AG04449 (cell line): ENCODE measurements at regions of chr10 and their contacts with region 1.

Region 1: GRCh38 chr10:3197348-3198003 is 24.9 kb upstream of the PITRM1 start:
- DNase-seq: peak; percentile 51
- H3K4me3 ChIP-seq: peak overlapping the region; percentile 57
- CTCF ChIP-seq: peak; percentile 93

Region 2: DNA sequence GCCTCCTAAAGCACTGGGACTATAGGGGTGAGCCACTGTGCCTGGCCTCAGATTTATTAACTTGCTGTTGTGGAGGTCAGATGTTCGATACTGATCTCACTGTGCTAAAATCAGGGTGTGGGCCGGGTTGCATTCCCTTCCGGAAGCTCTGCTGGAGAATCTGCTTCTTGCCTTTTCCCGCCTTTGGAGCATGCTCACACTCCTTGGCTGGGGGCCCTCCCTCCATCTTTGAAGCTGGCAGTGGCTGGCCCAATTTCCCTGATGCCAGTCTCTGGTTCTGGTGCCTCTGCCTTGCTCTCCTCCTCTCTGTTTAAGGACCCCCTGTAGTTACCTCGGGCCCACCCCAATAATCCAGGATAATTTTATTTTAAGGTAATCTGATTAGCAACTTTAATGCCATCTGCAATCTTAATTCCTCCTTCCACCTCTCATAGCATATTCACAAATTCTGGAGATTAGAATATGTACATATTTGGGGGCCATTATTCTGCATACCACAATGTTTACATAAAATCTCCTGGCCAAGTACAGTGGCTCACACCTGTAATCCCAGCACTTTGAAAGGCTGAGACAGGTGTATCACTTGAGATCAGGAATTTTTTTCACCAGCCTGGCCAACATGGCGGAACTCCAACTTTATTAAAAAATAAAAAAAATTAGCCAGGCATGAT is 17.0 kb before region 1 on chr10:
- CTCF ChIA-PET with region 1: interaction called, 32 read pairs
- POLR2A ChIA-PET with region 1: no interaction called
- DNase-seq: no peak
- H3K4me3 ChIP-seq: no peak overlapping the region
- CTCF ChIP-seq: no peak

Region 3: GRCh38 chr10:3213758-3214515 is 16.5 kb after region 1 on chr10:
- CTCF ChIA-PET with region 1: interaction called, 10 read pairs
- POLR2A ChIA-PET with region 1: interaction called, 3 read pairs
- DNase-seq: no peak
- H3K4me3 ChIP-seq: no peak overlapping the region
- CTCF ChIP-seq: no peak

Region 4: DNA sequence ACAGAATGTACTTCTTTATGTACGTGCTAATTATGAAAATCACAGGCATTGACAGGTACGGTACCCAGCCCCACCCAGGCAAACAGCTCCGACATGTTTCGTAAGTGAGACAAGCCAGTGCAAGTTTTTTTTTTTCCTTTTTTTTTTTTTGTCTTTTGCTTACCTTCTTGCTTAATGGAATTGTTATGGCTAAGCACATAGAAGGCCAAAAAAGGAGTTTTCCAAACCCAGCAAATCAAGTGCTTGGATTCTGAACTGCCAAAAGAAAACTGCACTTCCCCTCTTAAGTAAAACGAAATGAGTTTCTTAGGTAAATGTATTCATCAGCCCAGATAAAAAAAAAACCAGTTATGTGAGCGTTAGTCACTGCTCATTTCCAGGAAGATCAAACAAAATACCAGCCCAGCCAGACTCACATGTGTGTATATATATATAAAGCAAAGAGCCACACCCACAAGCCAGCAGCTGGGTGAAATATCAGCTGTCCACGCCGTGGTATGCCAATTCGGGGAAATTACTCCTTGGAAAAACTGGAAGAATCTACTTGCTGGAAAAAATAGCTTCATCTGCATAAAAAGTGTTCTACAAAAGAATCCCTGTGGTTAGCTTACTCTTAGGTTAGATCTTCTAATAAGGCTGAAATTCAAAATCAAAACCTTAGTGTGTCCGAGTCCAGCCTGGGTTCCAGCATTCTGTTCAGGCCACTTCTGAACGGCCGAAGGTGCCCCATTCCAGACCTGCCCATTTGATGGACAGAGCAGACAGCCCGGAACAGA is 579.5 kb after region 1 on chr10:
- CTCF ChIA-PET with region 1: interaction called, 14 read pairs
- POLR2A ChIA-PET with region 1: interaction called, 13 read pairs
- DNase-seq: no peak
- H3K4me3 ChIP-seq: no peak overlapping the region
- CTCF ChIP-seq: no peak

Region 5: GRCh38 chr10:4767033-4767814 is 1569.7 kb after region 1 on chr10:
- CTCF ChIA-PET with region 1: interaction called, 20 read pairs
- POLR2A ChIA-PET with region 1: no interaction called
- DNase-seq: no peak
- H3K4me3 ChIP-seq: no peak overlapping the region
- CTCF ChIP-seq: peak; percentile 55